A673 (cell line): ENCODE measurements at regions of chr1 and their contacts with region 1.

Region 1: GRCh38 chr1:34786521-34787325 is 5.7 kb downstream of the GJB3 start:
- DNase-seq: peak; percentile 78
- H3K4me3 ChIP-seq: no peak overlapping the region
- H3K27ac ChIP-seq: no peak overlapping the region
- H3K4me1 ChIP-seq: no peaks in the 10 kb centered on the region
- H3K27me3 ChIP-seq: peaks cover 14% of the 10 kb centered on the region
- CTCF ChIP-seq: peak; percentile 83

Region 2: GRCh38 chr1:34645109-34645688 is 141.5 kb before region 1 on chr1:
- CTCF ChIA-PET with region 1: no interaction called
- POLR2A ChIA-PET with region 1: no interaction called
- intact Hi-C with region 1: no loop called
- DNase-seq: no peak
- H3K4me3 ChIP-seq: no peak overlapping the region
- H3K27ac ChIP-seq: no peak overlapping the region
- H3K4me1 ChIP-seq: no peaks in the 10 kb centered on the region
- H3K27me3 ChIP-seq: peaks cover 32% of the 10 kb centered on the region
- CTCF ChIP-seq: no peak

Region 3: GRCh38 chr1:34852677-34853217 is 66.0 kb after region 1 on chr1:
- CTCF ChIA-PET with region 1: interaction called, 6 read pairs
- POLR2A ChIA-PET with region 1: no interaction called
- intact Hi-C with region 1: loop called (anchors 5 kb)
- DNase-seq: peak; percentile 96
- H3K4me3 ChIP-seq: no peak overlapping the region
- H3K27ac ChIP-seq: peak overlapping the region; percentile 44
- H3K4me1 ChIP-seq: no peaks in the 10 kb centered on the region
- H3K27me3 ChIP-seq: no peaks in the 10 kb centered on the region
- CTCF ChIP-seq: peak; percentile 100